Ovary (tissue), 10 donors: ENCODE measurements at regions of chr10 and their contacts with region 1.

Region 1: DNA sequence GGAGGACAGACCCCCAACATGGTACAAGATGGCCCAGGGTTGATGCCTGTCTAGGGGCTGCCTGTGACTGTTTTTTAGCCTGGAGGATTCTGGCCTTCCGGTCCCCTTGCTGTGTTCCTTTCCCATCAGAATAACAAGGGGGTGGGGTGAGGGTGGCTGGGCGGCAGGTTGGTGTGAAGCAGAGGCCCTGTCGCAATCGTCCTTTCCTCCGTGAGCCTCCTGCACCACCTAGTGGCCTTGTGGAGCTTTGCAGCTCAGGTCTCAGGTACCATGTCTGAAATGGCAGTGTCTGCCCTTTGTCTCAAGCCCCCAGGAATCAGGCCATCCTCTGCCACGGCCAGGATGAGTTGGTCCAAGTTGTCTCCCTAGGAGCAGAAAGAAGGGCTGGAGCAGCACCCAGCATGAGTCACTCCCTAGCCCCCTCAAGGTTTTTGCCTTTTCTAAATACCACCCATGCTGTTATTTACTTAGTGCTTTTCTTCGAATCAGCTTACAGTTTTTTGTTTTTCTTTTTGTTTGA is 24.2 kb downstream of the TACR2 start:
- DNase-seq: peak; percentile 81 to 91 (median 84)
- H3K4me3 ChIP-seq: no peak overlapping the region
- H3K27ac ChIP-seq: no peak overlapping the region
- H3K4me1 ChIP-seq: no peaks in the 10 kb centered on the region
- H3K27me3 ChIP-seq: no peaks in the 10 kb centered on the region
- CTCF ChIP-seq: peak; percentile 90 to 97 (median 92)
- EP300 ChIP-seq: no peak
- POLR2A ChIP-seq: no peak

Region 2: DNA sequence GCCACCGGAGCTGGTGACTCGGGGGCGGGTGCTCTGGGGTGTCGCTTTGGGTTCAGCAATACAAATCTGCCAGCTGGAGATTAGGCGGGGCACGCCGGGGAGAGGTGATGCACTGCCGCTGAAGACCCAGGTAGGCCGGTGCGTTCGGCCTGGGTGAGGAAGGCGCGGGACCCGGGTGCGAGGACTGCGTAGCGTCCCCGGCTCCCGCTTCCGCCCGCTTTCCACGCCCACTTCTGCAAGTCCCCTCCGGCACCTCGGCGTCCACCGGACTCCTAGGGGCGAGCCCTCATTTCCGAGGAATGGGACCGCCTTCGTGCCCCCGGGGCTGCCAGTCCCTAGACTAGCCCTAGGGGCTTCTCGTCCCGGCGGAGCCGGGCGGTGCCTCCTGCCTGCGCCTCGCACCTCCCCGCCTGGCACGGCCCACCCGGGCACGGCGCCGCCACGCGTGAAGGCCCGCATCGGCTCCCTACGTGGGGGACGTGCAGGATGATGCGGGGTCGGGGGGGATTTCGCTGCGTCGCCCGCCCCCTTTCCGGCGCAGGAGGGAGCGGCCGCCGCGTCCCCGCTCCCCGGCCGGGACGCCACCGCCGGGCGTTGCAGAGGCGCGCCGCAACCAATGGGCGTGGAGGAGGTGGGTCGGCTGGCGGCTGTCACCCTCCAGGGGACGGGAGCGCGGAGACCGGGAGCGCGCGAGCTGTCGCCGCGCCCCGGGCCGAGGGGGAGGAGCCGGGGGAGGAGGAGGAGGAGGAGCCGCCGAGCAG is 74.3 kb before region 1 on chr10:
- intact Hi-C with region 1: loop called in 1 of 4 experiments (anchors 10 kb)
- DNase-seq: peak; percentile 81 to 87 (median 86)
- H3K4me3 ChIP-seq: peak overlapping the region; percentile 87
- H3K27ac ChIP-seq: peak overlapping the region in 1 of 2 donors; percentile 76
- H3K4me1 ChIP-seq: peaks cover 10% of the 10 kb centered on the region
- H3K27me3 ChIP-seq: no peaks in the 10 kb centered on the region
- CTCF ChIP-seq: peak in 1 of 3 donors; percentile 12
- EP300 ChIP-seq: no peak
- POLR2A ChIP-seq: no peak